Mammary epithelial cell (primary cell): ENCODE measurements at regions of chr14 and their contacts with region 1.

Region 1: DNA sequence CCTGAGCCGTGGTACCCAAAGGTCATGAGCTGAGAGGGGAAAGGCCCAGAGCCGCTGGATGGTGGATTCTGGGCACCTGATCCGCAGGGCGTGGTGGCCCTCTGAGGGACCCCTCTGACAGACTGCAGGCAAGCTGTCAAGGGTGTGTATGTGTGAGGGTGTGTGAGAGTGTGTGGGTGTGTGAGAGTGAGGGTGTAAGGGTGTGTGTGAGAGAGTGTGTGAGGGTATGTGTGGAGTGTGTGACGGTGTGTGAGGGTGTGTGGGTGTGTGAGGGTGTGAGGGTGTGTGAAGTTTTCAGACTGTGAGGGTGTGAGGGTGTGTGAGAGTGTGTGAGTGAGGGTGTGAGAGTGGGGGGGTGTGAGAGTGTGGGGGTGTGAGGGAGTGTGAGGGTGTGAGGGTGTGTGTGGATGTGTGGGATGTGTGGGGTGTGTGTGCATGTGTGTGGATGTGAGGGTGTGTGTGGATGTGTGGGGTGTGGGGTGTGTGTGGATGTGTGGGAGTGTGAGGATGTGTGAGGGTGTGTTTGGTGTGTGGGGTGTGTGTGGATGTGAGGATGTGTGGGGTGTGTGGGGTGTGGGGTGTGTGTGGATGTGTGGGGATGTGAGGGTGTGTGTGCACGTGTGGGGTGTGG is 156.7 kb downstream of the TMEM121 start:
- DNase-seq: no peak
- H3K4me3 ChIP-seq: no peak overlapping the region
- H3K27ac ChIP-seq: no peak overlapping the region
- H3K4me1 ChIP-seq: no peaks in the 10 kb centered on the region
- H3K27me3 ChIP-seq: no peaks in the 10 kb centered on the region
- CTCF ChIP-seq: no peak

Region 2: GRCh38 chr14:105388110-105388951 is 294.7 kb before region 1 on chr14:
- CTCF ChIA-PET with region 1: no interaction called
- dilution Hi-C with region 1: no loop called
- in situ Hi-C with region 1: no loop called
- intact Hi-C with region 1: no loop called
- DNase-seq: no peak
- H3K4me3 ChIP-seq: no peak overlapping the region
- H3K27ac ChIP-seq: no peak overlapping the region
- H3K4me1 ChIP-seq: no peaks in the 10 kb centered on the region
- H3K27me3 ChIP-seq: no peaks in the 10 kb centered on the region
- CTCF ChIP-seq: no peak

Region 3: GRCh38 chr14:105562713-105563346 is 120.2 kb before region 1 on chr14:
- CTCF ChIA-PET with region 1: no interaction called
- dilution Hi-C with region 1: no loop called
- in situ Hi-C with region 1: no loop called
- intact Hi-C with region 1: loop called (anchors 10 kb)
- DNase-seq: no peak
- H3K4me3 ChIP-seq: no peak overlapping the region
- H3K27ac ChIP-seq: no peak overlapping the region
- H3K4me1 ChIP-seq: no peaks in the 10 kb centered on the region
- H3K27me3 ChIP-seq: no peaks in the 10 kb centered on the region
- CTCF ChIP-seq: no peak

Region 4: DNA sequence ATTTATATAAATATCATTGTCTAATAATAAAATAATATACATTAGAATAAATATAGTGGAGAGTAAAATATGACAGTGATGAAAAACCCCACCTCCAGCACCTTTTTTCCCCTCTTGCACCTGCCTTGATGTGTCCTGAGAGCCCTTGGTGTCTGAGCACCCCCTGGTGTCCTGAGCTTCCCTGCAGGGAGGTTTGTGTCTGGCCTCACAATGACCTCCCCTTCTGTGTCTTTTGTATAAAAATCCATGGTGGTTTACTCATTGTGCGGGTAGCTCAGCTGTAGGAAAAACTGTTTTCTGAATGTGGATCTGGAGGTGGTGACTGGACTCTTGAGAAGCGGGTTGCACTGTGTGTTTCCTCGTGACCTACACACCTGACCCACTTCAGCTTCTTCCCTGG is 480.3 kb after region 1 on chr14:
- CTCF ChIA-PET with region 1: no interaction called
- dilution Hi-C with region 1: no loop called
- in situ Hi-C with region 1: no loop called
- intact Hi-C with region 1: loop called (anchors 10 kb)
- DNase-seq: no peak
- H3K4me3 ChIP-seq: no peak overlapping the region
- H3K27ac ChIP-seq: no peak overlapping the region
- H3K4me1 ChIP-seq: no peaks in the 10 kb centered on the region
- H3K27me3 ChIP-seq: no peaks in the 10 kb centered on the region
- CTCF ChIP-seq: no peak